Activated CD4-positive, alpha-beta memory T cell treated with anti-CD3 and anti-CD28 coated beads for 36 hours (primary cell): ENCODE measurements at regions of chr3 and their contacts with region 1.

Region 1: DNA sequence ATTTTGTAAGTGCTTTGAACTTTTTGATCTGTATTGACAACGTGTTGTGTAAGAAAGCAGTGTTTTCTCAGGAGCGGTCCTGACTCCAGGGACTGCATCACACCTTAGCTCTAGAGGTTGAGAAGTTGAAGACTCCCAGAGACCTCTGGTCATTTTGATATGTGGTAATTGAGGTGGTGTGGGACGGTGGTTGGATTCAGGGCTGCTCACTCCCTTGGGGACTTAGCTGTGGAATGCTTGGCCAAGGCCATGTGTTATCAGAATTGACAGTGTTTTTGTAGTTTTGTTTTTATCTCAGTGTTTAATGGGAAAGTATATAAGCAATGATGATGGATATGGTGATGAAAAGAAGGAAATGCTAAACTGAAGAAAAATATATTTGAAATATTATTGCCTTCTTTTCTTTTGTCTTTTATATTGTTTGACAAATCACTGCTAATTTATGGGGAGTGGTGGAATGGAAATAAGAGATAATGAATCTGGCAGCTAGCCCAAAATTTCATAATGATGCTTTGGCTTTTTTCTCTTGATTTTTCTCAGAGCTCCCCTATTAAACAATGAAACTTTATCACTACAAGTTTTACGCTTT is 16.0 kb downstream of the CMSS1 start:
- DNase-seq: no peak
- H3K4me3 Mint-ChIP-seq: no peak overlapping the region
- H3K27ac Mint-ChIP-seq: no peak overlapping the region
- H3K4me1 Mint-ChIP-seq: peaks cover 20% of the 10 kb centered on the region
- H3K27me3 Mint-ChIP-seq: no peaks in the 10 kb centered on the region

Region 2: GRCh38 chr3:99355465-99355864 is 478.2 kb before region 1 on chr3:
- CTCF ChIA-PET with region 1: no interaction called
- POLR2A ChIA-PET with region 1: no interaction called
- intact Hi-C with region 1: no loop called
- DNase-seq: no peak
- H3K4me3 Mint-ChIP-seq: no peak overlapping the region
- H3K27ac Mint-ChIP-seq: no peak overlapping the region
- H3K4me1 Mint-ChIP-seq: no peaks in the 10 kb centered on the region
- H3K27me3 Mint-ChIP-seq: no peaks in the 10 kb centered on the region

Region 3: DNA sequence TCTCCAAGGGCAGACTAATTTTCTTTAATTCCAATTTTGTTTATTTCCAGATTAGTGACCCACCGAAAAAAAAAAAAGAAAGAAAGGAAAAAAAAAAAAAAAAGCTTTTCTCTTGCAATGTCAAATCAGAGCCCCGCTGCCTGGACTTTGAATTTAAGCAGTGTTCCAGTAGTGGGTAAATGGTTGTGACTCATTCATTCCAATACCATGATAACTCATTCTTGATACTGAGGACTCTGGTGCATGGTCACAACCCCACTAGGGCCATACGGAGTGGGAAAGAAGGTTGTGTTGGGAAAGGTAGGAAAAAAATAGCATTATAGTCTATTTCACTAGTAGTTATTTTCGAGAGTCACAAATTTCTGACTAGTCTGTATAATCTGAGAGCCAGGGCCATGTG is 254.5 kb before region 1 on chr3:
- CTCF ChIA-PET with region 1: no interaction called
- POLR2A ChIA-PET with region 1: no interaction called
- intact Hi-C with region 1: no loop called
- DNase-seq: no peak
- H3K4me3 Mint-ChIP-seq: no peak overlapping the region
- H3K27ac Mint-ChIP-seq: no peak overlapping the region
- H3K4me1 Mint-ChIP-seq: no peaks in the 10 kb centered on the region
- H3K27me3 Mint-ChIP-seq: no peaks in the 10 kb centered on the region

Region 4: DNA sequence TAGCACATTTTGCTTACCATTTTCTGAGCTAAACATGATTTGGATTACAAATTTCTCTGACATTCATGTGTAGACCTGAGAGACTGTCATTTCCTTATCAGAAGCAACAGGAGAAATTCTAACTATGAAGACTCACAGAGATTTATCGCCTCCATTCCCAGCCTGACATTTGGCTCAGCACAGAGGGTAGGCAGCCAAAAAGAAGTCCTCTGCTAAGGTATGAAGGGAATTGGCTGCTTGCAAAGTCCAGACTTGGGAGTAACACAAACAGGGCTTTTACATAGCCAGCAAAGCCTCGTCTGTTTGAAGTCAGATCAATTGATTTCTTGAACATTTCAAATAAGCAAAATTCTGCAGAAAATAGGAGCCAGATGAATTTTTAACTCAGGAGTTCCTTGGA is 73.1 kb before region 1 on chr3:
- CTCF ChIA-PET with region 1: no interaction called
- POLR2A ChIA-PET with region 1: no interaction called
- intact Hi-C with region 1: no loop called
- DNase-seq: no peak
- H3K4me3 Mint-ChIP-seq: no peak overlapping the region
- H3K27ac Mint-ChIP-seq: no peak overlapping the region
- H3K4me1 Mint-ChIP-seq: no peaks in the 10 kb centered on the region
- H3K27me3 Mint-ChIP-seq: no peaks in the 10 kb centered on the region

Region 5: GRCh38 chr3:99817437-99818240 is 16.1 kb before region 1 on chr3 and contains the start of gene CMSS1:
- CTCF ChIA-PET with region 1: interaction called, 26 read pairs
- POLR2A ChIA-PET with region 1: interaction called, 3 read pairs
- intact Hi-C with region 1: no loop called
- DNase-seq: peak; percentile 96
- H3K4me3 Mint-ChIP-seq: peak within 1 kb of the TSS; percentile 84
- H3K27ac Mint-ChIP-seq: peak within 1 kb of the TSS; percentile 92
- H3K4me1 Mint-ChIP-seq: peaks cover 35% of the 10 kb centered on the region
- H3K27me3 Mint-ChIP-seq: no peaks in the 10 kb centered on the region
- total RNA-seq, gene CMSS1: 95.6 to 97.2 TPM

Region 6: GRCh38 chr3:100068826-100069225 is 235.1 kb after region 1 on chr3:
- CTCF ChIA-PET with region 1: interaction called, 25 read pairs
- POLR2A ChIA-PET with region 1: no interaction called
- intact Hi-C with region 1: loop called (anchors 5 kb)
- DNase-seq: peak; percentile 84
- H3K4me3 Mint-ChIP-seq: no peak overlapping the region
- H3K27ac Mint-ChIP-seq: no peak overlapping the region
- H3K4me1 Mint-ChIP-seq: peaks cover 26% of the 10 kb centered on the region
- H3K27me3 Mint-ChIP-seq: no peaks in the 10 kb centered on the region

Region 7: GRCh38 chr3:100073899-100074307 is 240.2 kb after region 1 on chr3:
- CTCF ChIA-PET with region 1: interaction called, 25 read pairs
- POLR2A ChIA-PET with region 1: no interaction called
- intact Hi-C with region 1: loop called (anchors 5 kb)
- DNase-seq: no peak
- H3K4me3 Mint-ChIP-seq: peak overlapping the region; percentile 27
- H3K27ac Mint-ChIP-seq: peak overlapping the region; percentile 52
- H3K4me1 Mint-ChIP-seq: peaks cover 41% of the 10 kb centered on the region
- H3K27me3 Mint-ChIP-seq: no peaks in the 10 kb centered on the region

Region 8: DNA sequence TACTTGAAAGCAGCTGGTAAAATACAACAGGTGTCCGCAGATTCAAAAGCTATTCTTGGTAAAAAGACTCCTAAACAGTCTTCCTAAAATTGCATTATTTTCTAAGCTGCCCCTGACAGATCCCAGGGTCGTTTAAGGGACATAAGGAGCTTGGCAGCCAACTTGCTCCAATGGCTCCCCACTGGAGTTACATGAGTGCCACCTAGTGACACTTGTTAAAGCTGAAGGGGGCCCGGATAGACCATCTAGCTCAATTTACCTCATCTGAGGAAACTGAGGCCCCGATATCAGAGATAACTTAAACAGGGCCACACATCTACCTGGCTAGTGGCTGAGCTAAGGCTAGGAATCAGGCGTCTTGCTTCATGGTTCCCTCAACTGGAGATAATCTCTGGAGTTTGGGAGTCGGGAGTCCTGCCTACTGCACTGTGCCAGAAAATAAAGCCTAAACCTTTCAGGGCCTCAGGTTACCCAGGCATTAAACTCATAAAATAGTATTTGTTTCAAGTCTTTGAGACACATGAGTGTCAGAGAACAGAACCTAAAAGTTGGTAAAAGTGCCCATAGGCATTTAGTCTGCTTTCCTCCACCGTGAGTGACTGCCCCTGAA is 420.6 kb after region 1 on chr3:
- CTCF ChIA-PET with region 1: interaction called, 44 read pairs
- POLR2A ChIA-PET with region 1: interaction called, 4 read pairs
- intact Hi-C with region 1: loop called (anchors 2 kb)
- DNase-seq: peak; percentile 51
- H3K4me3 Mint-ChIP-seq: no peak overlapping the region
- H3K27ac Mint-ChIP-seq: no peak overlapping the region
- H3K4me1 Mint-ChIP-seq: peaks cover 8% of the 10 kb centered on the region
- H3K27me3 Mint-ChIP-seq: no peaks in the 10 kb centered on the region

Region 9: DNA sequence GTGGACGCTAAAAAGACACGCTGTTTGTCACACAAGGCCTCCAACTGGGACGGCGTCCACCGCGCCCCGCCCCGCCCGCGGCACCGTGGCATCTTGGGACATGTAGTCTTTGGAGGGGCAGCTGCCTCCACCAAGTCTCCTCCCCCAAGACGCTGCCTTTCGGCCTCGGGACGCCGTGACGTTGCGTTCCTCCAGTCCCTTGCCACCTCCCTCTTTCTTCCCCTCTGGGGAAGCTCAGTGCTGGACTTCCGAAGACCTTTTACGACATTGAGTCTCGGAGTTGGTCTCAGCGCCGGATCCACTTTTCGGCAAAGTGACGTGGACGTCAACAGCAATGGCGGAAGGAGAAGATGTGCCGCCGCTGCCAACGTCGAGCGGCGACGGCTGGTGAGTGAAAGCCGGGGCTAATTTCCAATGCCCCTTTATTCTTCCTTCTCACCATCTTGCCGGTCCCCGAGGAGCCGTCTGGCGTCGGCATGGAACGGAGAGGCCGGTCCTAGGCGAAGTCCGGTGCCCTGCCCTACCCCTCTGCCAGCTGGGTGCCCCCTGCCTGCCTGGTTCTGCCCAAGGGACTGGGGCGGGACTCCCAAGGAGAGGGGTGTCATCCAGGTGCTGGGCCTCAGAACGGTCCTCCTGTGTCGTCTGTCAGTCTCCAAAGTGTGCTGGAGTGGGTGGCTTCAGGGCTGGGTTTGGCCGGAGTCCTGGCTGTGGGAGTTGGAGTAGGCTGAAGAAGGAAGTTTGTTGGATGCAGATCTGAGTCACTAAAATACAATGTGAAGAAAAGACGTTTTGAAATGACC is 427.2 kb after region 1 on chr3 and contains the start of gene TBC1D23:
- CTCF ChIA-PET with region 1: interaction called, 11 read pairs
- POLR2A ChIA-PET with region 1: no interaction called
- intact Hi-C with region 1: no loop called
- DNase-seq: peak; percentile 99
- H3K4me3 Mint-ChIP-seq: peak within 1 kb of the TSS; percentile 92
- H3K27ac Mint-ChIP-seq: peak within 1 kb of the TSS; percentile 85
- H3K4me1 Mint-ChIP-seq: peaks cover 52% of the 10 kb centered on the region
- H3K27me3 Mint-ChIP-seq: no peaks in the 10 kb centered on the region
- total RNA-seq, gene TBC1D23: 17.8 to 22.7 TPM

Region 10: DNA sequence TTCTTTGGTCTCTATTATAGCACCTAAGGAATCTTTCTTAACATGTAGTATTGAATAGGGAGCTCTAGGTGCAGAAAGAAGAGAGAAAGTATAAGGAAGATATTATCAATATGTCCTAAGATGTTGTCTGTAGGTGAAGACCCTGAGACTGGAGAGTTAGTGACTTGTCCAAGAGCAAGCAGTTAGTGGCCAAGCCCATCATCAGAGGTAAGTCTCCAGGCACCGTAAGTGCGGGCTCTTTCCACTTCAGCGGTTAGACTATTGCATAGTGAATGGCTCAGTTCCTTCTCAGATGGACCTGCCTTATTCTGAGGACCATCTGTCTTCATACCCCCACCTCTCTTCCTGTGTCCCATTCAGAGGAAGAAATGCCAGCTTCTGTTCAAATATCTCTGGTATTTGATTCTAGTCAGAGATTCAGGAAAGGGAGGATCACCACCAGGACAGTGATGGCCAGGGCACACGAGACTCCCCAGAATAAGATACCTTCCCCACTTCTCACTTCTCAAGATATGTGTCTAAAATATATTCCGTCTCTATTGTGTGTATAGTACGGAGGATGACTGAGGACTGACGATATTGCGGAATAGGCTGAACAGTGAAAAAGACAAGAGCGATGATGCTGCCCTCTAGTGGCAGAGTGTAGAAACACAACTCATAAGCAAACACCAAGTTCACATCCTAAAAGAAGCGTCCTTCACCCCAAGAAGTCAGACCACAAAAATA is 756.6 kb after region 1 on chr3:
- CTCF ChIA-PET with region 1: interaction called, 5 read pairs
- POLR2A ChIA-PET with region 1: no interaction called
- intact Hi-C with region 1: loop called (anchors 2 kb)
- DNase-seq: peak; percentile 66
- H3K4me3 Mint-ChIP-seq: no peak overlapping the region
- H3K27ac Mint-ChIP-seq: no peak overlapping the region
- H3K4me1 Mint-ChIP-seq: peaks cover 6% of the 10 kb centered on the region
- H3K27me3 Mint-ChIP-seq: peaks cover 4% of the 10 kb centered on the region